Activated CD4-positive, alpha-beta T cell treated with anti-CD3 and anti-CD28 coated beads for 36 hours (primary cell): ENCODE measurements at regions of chr16 and their contacts with region 1.

Region 1: DNA sequence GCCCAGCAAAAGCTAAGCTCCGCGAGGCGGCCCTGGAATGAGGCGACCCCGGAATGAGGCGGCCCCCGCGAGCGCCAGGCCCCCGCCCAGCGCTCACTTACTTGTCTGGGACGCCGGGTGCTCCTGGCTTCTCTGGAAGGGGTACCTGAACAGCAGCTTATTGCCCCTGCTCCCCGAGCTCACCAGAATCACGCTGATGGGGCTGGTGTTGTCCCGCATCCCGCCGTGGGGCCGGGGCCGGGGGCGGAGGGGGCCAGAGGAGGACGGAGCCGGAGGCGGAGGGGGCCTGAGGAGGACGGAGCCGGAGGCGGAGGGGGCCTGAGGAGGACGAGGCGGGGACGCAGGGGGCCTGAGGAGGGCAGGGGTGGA is 440 bp downstream of the NPRL3 start:
- DNase-seq: peak; percentile 43
- ATAC-seq: peak; percentile 8
- H3K4me3 Mint-ChIP-seq: peak overlapping the region; percentile 78
- H3K27ac Mint-ChIP-seq: peak overlapping the region; percentile 81
- H3K4me1 Mint-ChIP-seq: peaks cover 24% of the 10 kb centered on the region
- H3K27me3 Mint-ChIP-seq: no peaks in the 10 kb centered on the region

Region 2: GRCh38 chr16:97466-98221 is 40.4 kb before region 1 on chr16:
- CTCF ChIA-PET with region 1: no interaction called
- POLR2A ChIA-PET with region 1: no interaction called
- intact Hi-C with region 1: no loop called
- DNase-seq: no peak
- ATAC-seq: no peak
- H3K4me3 Mint-ChIP-seq: no peak overlapping the region
- H3K27ac Mint-ChIP-seq: no peak overlapping the region
- H3K4me1 Mint-ChIP-seq: no peaks in the 10 kb centered on the region
- H3K27me3 Mint-ChIP-seq: no peaks in the 10 kb centered on the region

Region 3: DNA sequence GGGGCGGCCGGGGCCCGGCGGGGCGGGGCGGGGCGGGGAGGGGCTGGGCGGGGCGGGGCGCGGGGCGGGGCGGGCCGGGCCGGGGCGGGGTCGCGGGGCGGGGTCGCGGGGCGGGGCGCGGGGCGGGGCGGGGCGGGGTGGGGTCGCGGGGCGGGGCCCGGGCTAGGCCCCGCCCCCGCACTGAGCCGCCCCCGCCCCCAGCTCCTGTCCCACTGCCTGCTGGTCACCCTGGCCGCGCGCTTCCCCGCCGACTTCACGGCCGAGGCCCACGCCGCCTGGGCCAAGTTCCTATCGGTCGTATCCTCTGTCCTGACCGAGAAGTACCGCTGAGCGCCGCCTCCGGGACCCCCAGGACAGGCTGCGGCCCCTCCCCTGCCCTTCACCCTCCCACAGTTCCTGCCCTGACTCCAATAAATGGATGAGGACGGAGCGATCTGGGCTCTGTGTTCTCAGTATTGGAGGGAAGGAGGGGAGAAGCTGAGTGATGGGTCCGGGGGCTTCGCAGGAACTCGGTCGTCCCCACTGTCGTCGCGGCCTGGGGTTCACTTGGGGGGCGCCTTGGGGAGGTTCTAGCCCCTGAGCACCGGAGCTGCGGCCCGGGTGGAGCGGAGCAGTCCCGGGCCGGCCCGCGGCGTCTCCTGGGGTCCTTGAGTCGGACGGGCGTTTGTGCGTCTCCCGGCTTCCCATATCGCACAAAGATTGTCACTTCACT is 26.9 kb after region 1 on chr16:
- CTCF ChIA-PET with region 1: interaction called, 6 read pairs
- POLR2A ChIA-PET with region 1: no interaction called
- intact Hi-C with region 1: loop called in 1 of 2 experiments (anchors 1 kb)
- DNase-seq: no peak
- ATAC-seq: peak; percentile 16
- H3K4me3 Mint-ChIP-seq: peak overlapping the region; percentile 26
- H3K27ac Mint-ChIP-seq: no peak overlapping the region
- H3K4me1 Mint-ChIP-seq: peaks cover 5% of the 10 kb centered on the region
- H3K27me3 Mint-ChIP-seq: peaks cover 32% of the 10 kb centered on the region

Region 4: DNA sequence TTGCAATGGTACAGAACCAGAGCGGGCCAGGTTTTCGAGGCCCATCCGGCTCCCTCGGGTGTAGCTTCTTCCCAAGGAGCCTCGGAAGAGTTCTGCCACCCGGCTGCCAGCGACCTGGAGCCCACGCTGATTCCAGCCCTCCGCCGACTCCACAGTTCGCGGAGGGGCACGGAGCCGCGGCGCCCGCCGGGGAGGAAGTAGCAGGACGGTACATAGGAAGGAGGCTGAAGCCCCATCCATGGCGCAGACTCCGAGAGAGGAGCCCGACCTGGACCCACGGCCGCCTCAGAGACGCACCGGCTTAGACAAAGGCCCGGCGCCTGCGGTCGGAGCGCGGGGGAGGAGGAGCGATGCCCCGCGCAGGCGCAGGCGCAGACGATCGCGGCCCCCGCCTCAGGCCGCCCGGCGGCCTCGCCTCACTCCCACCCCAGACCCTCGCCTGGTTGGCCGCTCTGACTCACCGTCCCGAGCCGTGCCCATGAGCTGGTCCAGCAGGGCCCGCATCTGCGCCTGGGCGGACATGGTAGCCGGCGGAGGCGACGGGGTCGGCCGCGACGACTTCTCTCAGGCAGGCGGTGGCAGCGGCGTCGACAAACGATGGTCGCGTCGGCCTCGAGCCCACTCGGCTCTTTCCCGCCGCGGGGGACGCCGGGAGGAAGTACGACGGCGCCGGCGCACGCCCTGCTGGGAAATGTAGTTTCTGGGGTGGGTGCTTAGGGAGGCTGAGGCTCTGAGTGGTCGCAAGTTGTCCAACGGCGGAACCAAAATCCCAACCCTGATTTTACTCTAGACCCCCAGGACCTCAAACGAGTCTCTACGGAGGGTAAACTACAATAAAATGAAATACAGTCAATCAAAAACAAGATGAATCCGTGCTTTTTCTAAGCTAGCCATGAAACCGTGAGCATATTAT is 91.0 kb after region 1 on chr16 and contains the start of gene LUC7L:
- CTCF ChIA-PET with region 1: no interaction called
- POLR2A ChIA-PET with region 1: no interaction called
- intact Hi-C with region 1: loop called in 1 of 2 experiments (anchors 1 kb)
- DNase-seq: peak; percentile 93
- ATAC-seq: peak; percentile 90
- H3K4me3 Mint-ChIP-seq: peak within 1 kb of the TSS; percentile 92
- H3K27ac Mint-ChIP-seq: peak within 1 kb of the TSS; percentile 85
- H3K4me1 Mint-ChIP-seq: peaks cover 30% of the 10 kb centered on the region
- H3K27me3 Mint-ChIP-seq: no peaks in the 10 kb centered on the region
- total RNA-seq, gene LUC7L: 44.6 to 50.1 TPM

Region 5: GRCh38 chr16:381789-382717 is 244.0 kb after region 1 on chr16 and contains the start of gene PGAP6:
- CTCF ChIA-PET with region 1: no interaction called
- POLR2A ChIA-PET with region 1: no interaction called
- intact Hi-C with region 1: loop called in 1 of 2 experiments (anchors 5 kb)
- DNase-seq: peak; percentile 83
- ATAC-seq: peak; percentile 73
- H3K4me3 Mint-ChIP-seq: peak within 1 kb of the TSS; percentile 74
- H3K27ac Mint-ChIP-seq: no peak within 1 kb of the TSS
- H3K4me1 Mint-ChIP-seq: peaks cover 24% of the 10 kb centered on the region
- H3K27me3 Mint-ChIP-seq: no peaks in the 10 kb centered on the region
- total RNA-seq, gene PGAP6: 22.9 to 40.8 TPM